PC-3 (cell line): ENCODE measurements at regions of chr7 and their contacts with region 1.

Region 1: GRCh38 chr7:16753102-16753931 is at the start of gene TSPAN13:
- DNase-seq: peak; percentile 95
- ATAC-seq: peak; percentile 87
- H3K4me3 ChIP-seq: peak within 1 kb of the TSS; percentile 88
- H3K27ac ChIP-seq: peak within 1 kb of the TSS; percentile 51
- H3K4me1 ChIP-seq: peaks cover 28% of the 10 kb centered on the region
- H3K27me3 ChIP-seq: no peaks in the 10 kb centered on the region
- CTCF ChIP-seq: no peak
- total RNA-seq, gene TSPAN13: 27.6 and 34.9 TPM in 2 replicates

Region 2: DNA sequence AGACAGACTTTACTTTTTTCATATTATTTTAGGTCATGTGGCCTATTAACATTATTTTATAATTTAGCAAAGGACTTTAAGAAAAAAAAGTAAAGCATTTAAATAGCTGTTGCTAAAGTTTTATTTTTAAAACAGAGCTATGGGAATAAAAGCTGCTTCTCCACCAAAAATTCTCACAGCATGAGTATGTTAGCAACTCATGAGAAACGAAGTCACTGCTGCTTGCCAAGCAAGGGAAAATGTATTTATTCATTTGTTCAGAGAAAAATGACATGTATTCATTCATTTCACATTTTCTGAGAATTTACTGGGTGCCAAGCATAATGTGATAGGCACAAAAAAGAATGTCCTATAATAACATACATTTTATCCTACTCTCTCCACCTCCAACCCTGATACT is 221.6 kb before region 1 on chr7:
- CTCF ChIA-PET with region 1: no interaction called
- POLR2A ChIA-PET with region 1: no interaction called
- intact Hi-C with region 1: no loop called
- DNase-seq: no peak
- ATAC-seq: no peak
- H3K4me3 ChIP-seq: no peak overlapping the region
- H3K27ac ChIP-seq: no peak overlapping the region
- H3K4me1 ChIP-seq: no peaks in the 10 kb centered on the region
- H3K27me3 ChIP-seq: no peaks in the 10 kb centered on the region
- CTCF ChIP-seq: no peak

Region 3: DNA sequence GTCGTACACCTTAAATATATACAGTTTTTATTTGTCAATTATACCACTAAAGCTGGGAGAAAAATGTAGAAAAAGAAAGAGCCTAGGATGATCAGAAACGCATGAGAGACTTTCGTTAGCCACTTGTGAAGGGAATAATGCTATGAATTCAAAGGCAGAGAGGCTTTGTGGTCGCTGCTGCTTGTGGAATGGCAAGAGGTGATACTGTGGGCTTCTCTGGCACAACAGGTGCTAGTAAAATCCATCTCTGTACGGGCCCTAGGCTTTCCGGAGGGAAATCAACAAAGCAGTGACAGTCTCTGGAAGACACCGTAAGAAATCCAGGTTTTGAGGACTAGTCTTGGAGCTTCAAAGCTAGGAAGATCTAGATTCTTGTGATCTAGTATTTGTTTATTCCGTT is 174.1 kb before region 1 on chr7:
- CTCF ChIA-PET with region 1: no interaction called
- POLR2A ChIA-PET with region 1: no interaction called
- intact Hi-C with region 1: no loop called
- DNase-seq: no peak
- ATAC-seq: no peak
- H3K4me3 ChIP-seq: no peak overlapping the region
- H3K27ac ChIP-seq: no peak overlapping the region
- H3K4me1 ChIP-seq: no peaks in the 10 kb centered on the region
- H3K27me3 ChIP-seq: no peaks in the 10 kb centered on the region
- CTCF ChIP-seq: no peak

Region 4: DNA sequence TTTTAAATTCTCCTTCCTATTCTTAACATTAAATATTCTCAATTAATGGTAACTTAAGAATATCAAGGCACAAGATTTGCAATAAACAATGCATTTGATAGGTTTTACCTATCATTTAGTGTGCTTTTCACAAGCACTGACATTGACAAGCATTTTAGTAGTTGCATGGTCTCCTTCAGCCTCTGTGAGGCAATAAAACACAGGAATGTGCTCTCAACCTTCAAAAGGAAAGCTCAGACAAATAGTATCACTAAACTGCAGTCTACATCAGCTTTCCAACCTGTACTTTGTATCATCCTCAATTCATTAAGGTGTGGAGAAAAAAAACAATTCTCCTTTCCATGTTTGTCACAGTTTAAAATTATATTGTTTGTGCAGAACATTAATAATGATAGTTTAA is 50.9 kb before region 1 on chr7:
- CTCF ChIA-PET with region 1: interaction called, 4 read pairs
- POLR2A ChIA-PET with region 1: no interaction called
- intact Hi-C with region 1: loop called (anchors 5 kb)
- DNase-seq: no peak
- ATAC-seq: no peak
- H3K4me3 ChIP-seq: no peak overlapping the region
- H3K27ac ChIP-seq: no peak overlapping the region
- H3K4me1 ChIP-seq: no peaks in the 10 kb centered on the region
- H3K27me3 ChIP-seq: no peaks in the 10 kb centered on the region
- CTCF ChIP-seq: 0 out of 2 replicates have a peak, but pooled peaks have one; percentile 18

Region 5: GRCh38 chr7:16739863-16740622 is 13.3 kb before region 1 on chr7:
- CTCF ChIA-PET with region 1: no interaction called
- POLR2A ChIA-PET with region 1: no interaction called
- intact Hi-C with region 1: loop called (anchors 1 kb)
- DNase-seq: peak; percentile 92
- ATAC-seq: peak; percentile 97
- H3K4me3 ChIP-seq: no peak overlapping the region
- H3K27ac ChIP-seq: peak overlapping the region; percentile 65
- H3K4me1 ChIP-seq: peaks cover 41% of the 10 kb centered on the region
- H3K27me3 ChIP-seq: no peaks in the 10 kb centered on the region
- CTCF ChIP-seq: no peak